Activated naive CD4-positive, alpha-beta T cell treated with anti-CD3 and anti-CD28 coated beads, Interleukin-2, amount 10 ng/mL, durations not matched to agents 7 days and 5 days (primary cell): ENCODE measurements at regions of chr14 and their contacts with region 1.

Region 1: DNA sequence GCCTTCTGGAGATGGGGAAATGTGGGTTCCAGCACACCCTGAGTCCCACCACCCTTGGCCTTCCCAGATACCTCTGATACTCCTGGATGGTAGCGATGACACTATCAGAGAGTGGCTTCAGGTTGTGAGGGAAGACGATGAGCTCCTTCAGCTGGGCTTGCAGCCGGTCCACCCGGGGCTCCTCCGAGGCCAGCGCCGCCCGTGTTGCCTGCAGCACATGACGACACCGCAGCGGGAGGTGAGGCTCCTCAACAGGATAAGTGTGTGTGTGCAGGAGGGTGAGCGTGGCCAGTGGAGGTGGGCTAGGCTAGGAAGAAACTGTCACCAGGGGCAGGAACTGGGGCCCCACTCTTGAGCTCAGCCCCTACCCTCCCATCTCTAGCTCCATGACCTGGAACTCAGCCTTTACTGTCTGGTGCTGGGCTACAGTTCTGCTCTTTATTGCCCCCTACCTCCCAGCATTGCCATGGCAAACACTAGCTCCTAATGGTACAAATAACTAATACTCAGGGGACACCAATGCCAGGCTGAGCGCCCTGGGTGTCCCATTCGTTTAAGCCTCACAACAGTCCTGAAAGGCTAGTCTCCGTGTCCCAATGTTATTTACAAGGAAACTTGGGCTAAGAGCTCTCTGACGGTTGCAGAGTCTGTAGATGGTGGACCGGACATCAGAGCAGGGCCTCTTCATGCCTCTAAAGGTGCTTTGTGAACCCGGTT is 64.1 kb downstream of the SYNE3 start:
- DNase-seq: peak; percentile 33
- H3K4me3 Mint-ChIP-seq: no peak overlapping the region
- H3K27ac Mint-ChIP-seq: no peak overlapping the region
- H3K4me1 Mint-ChIP-seq: no peaks in the 10 kb centered on the region
- H3K27me3 Mint-ChIP-seq: no peaks in the 10 kb centered on the region

Region 2: DNA sequence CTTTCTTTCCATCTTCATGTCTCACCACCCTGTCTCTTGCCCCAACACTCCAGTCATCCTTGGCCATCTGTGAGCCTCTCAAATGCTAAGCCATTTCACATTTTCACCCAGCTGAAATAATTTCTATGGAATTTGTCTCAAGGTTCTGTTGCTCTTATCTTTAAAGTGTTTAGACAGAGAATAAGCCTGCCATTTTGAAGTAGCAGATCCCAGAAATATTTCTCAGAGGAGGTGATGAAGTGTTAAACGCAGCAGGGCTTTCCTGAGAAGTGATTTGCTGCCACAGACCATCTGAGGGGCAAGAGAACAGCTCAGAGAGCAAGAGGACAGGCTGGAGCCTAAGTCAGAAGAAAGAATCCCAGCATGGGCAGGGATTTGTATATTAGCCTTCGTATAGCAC is 61.0 kb before region 1 on chr14:
- CTCF ChIA-PET with region 1: no interaction called
- DNase-seq: no peak
- H3K4me3 Mint-ChIP-seq: no peak overlapping the region
- H3K27ac Mint-ChIP-seq: no peak overlapping the region
- H3K4me1 Mint-ChIP-seq: no peaks in the 10 kb centered on the region
- H3K27me3 Mint-ChIP-seq: peaks cover 23% of the 10 kb centered on the region

Region 3: GRCh38 chr14:95402176-95402575 is 50.2 kb before region 1 on chr14:
- CTCF ChIA-PET with region 1: no interaction called
- DNase-seq: no peak
- H3K4me3 Mint-ChIP-seq: no peak overlapping the region
- H3K27ac Mint-ChIP-seq: no peak overlapping the region
- H3K4me1 Mint-ChIP-seq: no peaks in the 10 kb centered on the region
- H3K27me3 Mint-ChIP-seq: no peaks in the 10 kb centered on the region

Region 4: DNA sequence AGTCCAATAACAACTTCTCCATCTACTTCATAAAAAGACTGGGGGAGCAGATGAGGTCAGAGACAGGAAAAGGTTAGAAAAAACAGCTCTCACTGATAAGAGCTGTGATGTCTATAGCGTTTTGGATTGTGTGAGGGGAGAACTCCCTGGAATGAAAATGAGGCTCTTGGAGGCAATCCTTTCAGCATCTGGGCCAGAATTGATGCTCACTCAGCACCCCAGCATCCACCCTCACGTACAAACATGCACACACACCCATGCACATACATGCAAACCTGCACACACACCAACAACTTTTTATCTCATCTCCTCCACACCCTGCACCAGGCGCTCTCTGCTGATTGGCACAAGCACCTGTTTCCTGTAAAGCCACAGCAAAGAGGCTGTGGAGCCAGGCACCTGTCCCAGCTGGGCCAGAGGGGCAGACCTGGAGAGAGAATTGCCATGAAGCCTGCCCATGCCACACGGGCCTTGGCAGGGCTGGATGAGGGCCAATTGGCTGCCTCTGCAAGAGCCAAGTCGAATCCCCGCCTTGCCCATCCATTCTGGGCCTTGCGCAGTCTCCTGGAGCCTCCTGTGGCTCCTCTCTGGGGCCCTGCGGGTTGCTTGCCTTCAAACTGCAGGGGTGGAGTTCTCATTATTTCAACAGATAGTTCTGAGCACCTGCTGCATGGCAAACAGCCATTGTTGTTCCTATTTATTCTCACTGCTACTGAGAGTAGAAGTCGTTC is 11.0 kb after region 1 on chr14:
- CTCF ChIA-PET with region 1: interaction called, 19 read pairs
- DNase-seq: peak; percentile 69
- H3K4me3 Mint-ChIP-seq: peak overlapping the region; percentile 22
- H3K27ac Mint-ChIP-seq: peak overlapping the region; percentile 98
- H3K4me1 Mint-ChIP-seq: peaks cover 55% of the 10 kb centered on the region
- H3K27me3 Mint-ChIP-seq: no peaks in the 10 kb centered on the region